AG04450 (cell line): ENCODE measurements at regions of chr2 and their contacts with region 1.

Region 1: DNA sequence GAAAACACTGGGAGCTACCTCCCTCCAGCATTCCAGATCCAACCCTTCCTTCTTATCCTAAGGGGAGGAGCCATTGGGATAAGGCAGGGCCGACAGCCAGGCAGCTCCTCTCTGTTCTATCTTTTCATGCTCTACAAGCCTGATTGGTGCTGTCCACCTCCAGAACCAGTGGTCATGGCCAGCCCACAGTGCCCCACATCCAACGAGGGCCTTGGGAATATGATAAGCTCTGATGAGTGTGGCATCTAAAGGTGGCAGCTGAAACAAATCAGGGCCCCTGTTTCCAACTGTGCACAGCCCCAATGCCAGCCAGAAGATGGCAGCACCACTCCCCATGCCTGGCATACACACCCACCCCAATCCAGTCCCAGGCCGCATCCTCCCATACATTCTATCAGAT is 329.3 kb downstream of the C1D start:
- DNase-seq: no peak
- H3K4me3 ChIP-seq: no peak overlapping the region
- H3K27ac ChIP-seq: no peak overlapping the region
- H3K27me3 ChIP-seq: no peaks in the 10 kb centered on the region
- CTCF ChIP-seq: peak; percentile 49

Region 2: DNA sequence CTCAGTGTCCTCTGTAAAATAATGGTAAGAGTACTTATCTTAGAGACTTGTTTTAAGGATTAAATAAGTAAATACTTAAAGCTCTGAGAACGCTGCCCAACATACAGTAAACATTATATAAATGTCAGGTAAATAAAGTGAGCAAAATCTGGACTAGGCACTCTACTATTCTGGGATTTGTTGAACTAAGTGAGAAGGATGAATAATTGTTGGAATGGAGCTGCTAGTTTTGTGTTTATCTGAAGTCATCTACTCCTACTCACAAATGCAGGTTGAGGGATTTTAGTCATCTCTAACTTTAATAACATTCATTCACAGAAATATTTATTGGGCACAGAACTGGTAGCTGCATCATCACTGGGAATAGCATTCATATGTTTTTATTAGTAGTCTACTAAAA is 1195.2 kb before region 1 on chr2:
- CTCF ChIA-PET with region 1: no interaction called
- POLR2A ChIA-PET with region 1: interaction called, 10 read pairs
- DNase-seq: no peak
- H3K4me3 ChIP-seq: no peak overlapping the region
- H3K27ac ChIP-seq: no peak overlapping the region
- H3K27me3 ChIP-seq: no peaks in the 10 kb centered on the region
- CTCF ChIP-seq: no peak

Region 3: DNA sequence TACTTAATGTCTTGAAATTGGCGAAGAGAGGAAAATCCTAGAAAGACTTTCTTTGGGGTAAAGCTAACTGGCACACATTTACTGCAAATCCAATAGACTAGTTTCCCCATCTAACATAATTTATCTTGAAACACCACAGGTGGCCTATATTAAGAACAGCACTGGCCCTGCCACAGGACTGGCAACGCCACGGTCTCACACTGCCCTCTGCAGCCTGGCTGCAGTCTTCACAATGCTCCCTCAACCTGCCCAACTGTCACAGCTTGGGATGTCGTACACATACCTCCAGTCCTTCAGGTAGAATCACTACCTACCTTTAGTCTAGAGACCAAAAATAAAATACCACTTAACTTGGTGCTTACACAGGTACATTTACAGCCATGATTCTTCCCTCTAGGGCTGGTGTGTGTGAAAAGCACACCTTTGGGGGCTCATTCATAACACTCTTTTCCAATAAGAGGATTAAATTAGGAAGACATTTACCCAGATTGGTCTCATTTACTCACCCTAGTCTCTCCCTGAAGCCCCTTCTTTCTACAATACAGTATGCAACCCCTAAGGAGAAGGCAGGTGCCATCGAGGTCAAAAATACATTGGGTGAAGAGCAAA is 107.0 kb after region 1 on chr2:
- CTCF ChIA-PET with region 1: interaction called, 12 read pairs
- POLR2A ChIA-PET with region 1: no interaction called
- DNase-seq: peak; percentile 59
- H3K4me3 ChIP-seq: no peak overlapping the region
- H3K27ac ChIP-seq: no peak overlapping the region
- H3K27me3 ChIP-seq: no peaks in the 10 kb centered on the region
- CTCF ChIP-seq: peak; percentile 95